ENCODE measurements at regions of chr3 and their contacts with region 1.

Region 1: DNA sequence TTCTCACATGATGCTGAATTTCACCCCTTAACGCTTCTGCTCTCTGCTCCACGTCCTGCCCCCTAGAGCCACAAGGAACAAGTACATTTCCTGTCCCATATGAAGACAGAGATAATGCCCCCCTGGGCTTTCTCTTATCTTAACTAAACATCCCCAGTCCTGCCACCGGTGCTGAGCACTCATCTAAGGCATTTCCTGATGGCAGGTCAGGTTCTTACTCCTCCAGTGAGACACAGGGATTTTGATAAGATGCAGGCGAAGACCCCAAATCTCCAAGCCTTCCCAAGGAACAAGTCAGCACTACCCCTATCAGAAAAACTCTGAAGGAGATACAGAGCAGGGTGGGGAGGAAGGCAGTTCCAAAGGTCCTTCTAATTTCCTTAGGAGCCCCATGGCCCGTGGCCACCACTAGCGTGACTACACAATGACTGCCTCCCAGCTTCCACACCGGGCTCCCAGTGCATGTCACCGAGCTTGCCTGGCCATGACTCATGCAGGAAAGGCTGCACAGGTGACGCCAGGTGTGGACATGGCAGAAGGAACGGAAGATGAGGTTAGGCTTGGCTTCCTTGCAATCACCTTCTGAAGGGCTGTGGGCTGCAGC is 152.9 kb downstream of the XXYLT1 start:
- DNase-seq: peak; percentile 87 to 92 (median 88)
- ATAC-seq: peak; percentile 86
- H3K4me3 ChIP-seq: no peak overlapping the region
- H3K27ac ChIP-seq: peak overlapping the region; percentile 70
- H3K4me1 ChIP-seq: peaks cover 42 to 59% of the 10 kb centered on the region in 2 experiments
- H3K27me3 ChIP-seq: no peaks in the 10 kb centered on the region
- CTCF ChIP-seq: peak; percentile 58 to 71 (median 67)
- EP300 ChIP-seq: peak; percentile 96
- POLR2A ChIP-seq: no peak
- RAD21 ChIP-seq: peak; percentile 43 to 57

Region 2: DNA sequence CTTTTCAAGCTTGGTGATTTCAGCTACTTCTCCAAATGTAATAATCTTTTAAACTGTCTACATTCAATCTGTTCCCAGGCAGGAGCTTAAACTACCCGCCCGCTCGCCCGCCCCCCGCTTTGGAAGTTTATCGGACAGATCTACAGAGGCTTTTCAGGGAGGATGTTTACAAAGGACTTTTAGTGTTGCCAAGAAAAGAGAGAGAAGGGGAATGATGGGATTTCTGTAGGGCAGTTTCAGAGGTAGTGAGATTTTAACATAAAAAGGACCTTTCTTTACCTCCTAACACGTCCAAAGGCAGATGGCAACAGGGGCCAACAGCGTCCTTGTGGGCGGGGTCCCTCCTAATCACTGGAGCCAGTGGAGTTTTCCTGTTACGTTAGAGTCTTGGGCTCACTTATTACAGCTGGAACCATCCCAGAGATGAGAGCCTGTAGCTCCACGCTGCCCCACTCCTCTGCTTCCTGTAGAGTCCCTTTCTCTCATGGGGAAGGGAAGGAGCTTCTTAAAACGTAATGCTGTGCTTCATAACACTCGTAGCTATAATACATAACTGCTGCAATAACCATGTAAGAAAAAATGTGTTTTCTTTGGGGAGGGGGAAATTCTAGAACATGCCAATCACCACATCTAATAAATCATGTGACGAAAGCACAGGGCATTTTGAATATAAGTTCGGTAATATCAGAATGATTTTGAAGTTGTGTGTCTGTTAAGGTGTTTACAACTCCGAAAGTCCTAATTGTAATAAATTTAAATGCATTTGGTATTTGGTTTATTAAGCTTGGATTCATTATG is 951.2 kb before region 1 on chr3:
- CTCF ChIA-PET with region 1: no interaction called
- POLR2A ChIA-PET with region 1: no interaction called
- in situ Hi-C with region 1: no loop called
- intact Hi-C with region 1: no loop called
- DNase-seq: peak; percentile 20 to 69 (median 38)
- ATAC-seq: peak; percentile 80
- H3K4me3 ChIP-seq: 0 out of 2 replicates have a peak overlapping the region, but pooled peaks have one; percentile 5
- H3K27ac ChIP-seq: peak overlapping the region; percentile 12; the same call in 1 of the 3 replicates
- H3K4me1 ChIP-seq: peaks cover 0 to 18% of the 10 kb centered on the region in 2 experiments; a peak in 4 of 5 replicates
- H3K27me3 ChIP-seq: no peaks in the 10 kb centered on the region
- CTCF ChIP-seq: no peak
- EP300 ChIP-seq: no peak; the same call in 1 of the 2 replicates
- POLR2A ChIP-seq: no peak
- RAD21 ChIP-seq: peak in 1 of 2 experiments; percentile 8; a peak in 1 of 4 replicates

Region 3: DNA sequence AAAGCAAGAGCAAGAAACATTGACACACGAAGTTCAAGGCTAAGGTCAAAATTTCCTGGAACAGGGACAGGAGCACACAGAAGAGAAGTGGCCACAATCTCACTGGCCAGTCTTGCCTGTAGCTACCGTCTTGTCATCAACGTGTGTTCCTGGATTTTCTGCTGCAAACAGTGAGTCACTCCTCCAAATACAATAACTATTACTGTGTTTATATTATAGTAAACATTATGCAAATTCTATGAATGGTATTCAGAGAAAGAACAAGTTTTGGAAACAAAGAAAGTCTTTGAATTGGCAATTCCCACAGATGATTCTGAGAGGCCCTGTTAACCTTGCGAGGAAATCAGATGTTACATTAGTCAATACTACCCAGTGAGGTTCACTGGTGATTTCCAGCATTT is 211.9 kb before region 1 on chr3:
- CTCF ChIA-PET with region 1: no interaction called
- POLR2A ChIA-PET with region 1: no interaction called
- in situ Hi-C with region 1: no loop called
- intact Hi-C with region 1: no loop called
- DNase-seq: no peak
- ATAC-seq: no peak
- H3K4me3 ChIP-seq: no peak overlapping the region
- H3K27ac ChIP-seq: no peak overlapping the region
- H3K4me1 ChIP-seq: no peaks in the 10 kb centered on the region
- H3K27me3 ChIP-seq: peaks cover 4 to 33% of the 10 kb centered on the region in 2 experiments; a peak in 3 of 5 replicates
- CTCF ChIP-seq: no peak
- EP300 ChIP-seq: no peak
- POLR2A ChIP-seq: no peak
- RAD21 ChIP-seq: no peak

Region 4: GRCh38 chr3:195154793-195155535 is 36.9 kb after region 1 on chr3:
- CTCF ChIA-PET with region 1: no interaction called
- POLR2A ChIA-PET with region 1: interaction called, 4 read pairs
- in situ Hi-C with region 1: no loop called
- intact Hi-C with region 1: loop called (anchors 5 kb)
- DNase-seq: peak in 2 of 4 experiments; percentile 57 to 70
- ATAC-seq: peak; percentile 17
- H3K4me3 ChIP-seq: no peak overlapping the region
- H3K27ac ChIP-seq: peak overlapping the region; percentile 84
- H3K4me1 ChIP-seq: peaks cover 39 to 55% of the 10 kb centered on the region in 2 experiments
- H3K27me3 ChIP-seq: no peaks in the 10 kb centered on the region
- CTCF ChIP-seq: no peak
- EP300 ChIP-seq: peak; percentile 15; the same call in 1 of the 2 replicates
- POLR2A ChIP-seq: no peak
- RAD21 ChIP-seq: no peak; a peak in 1 of 4 replicates

Region 5: GRCh38 chr3:195182470-195182795 is 64.4 kb after region 1 on chr3:
- CTCF ChIA-PET with region 1: no interaction called
- POLR2A ChIA-PET with region 1: no interaction called
- in situ Hi-C with region 1: no loop called
- intact Hi-C with region 1: loop called (anchors 10 kb)
- DNase-seq: peak in 2 of 4 experiments; percentile 28 to 78
- ATAC-seq: peak; percentile 58
- H3K4me3 ChIP-seq: no peak overlapping the region
- H3K27ac ChIP-seq: peak overlapping the region; percentile 72
- H3K4me1 ChIP-seq: peaks cover 48 to 80% of the 10 kb centered on the region in 2 experiments
- H3K27me3 ChIP-seq: no peaks in the 10 kb centered on the region
- CTCF ChIP-seq: no peak
- EP300 ChIP-seq: peak; percentile 28; the same call in 1 of the 2 replicates
- POLR2A ChIP-seq: no peak
- RAD21 ChIP-seq: no peak; a peak in 1 of 4 replicates

Region 6: GRCh38 chr3:195259475-195260279 is 141.6 kb after region 1 on chr3:
- CTCF ChIA-PET with region 1: no interaction called
- POLR2A ChIA-PET with region 1: no interaction called
- in situ Hi-C with region 1: no loop called
- intact Hi-C with region 1: loop called (anchors 5 kb)
- DNase-seq: peak; percentile 91 to 97 (median 95)
- ATAC-seq: peak; percentile 90
- H3K4me3 ChIP-seq: peak overlapping the region; percentile 55
- H3K27ac ChIP-seq: peak overlapping the region; percentile 89
- H3K4me1 ChIP-seq: peaks cover 14 to 41% of the 10 kb centered on the region in 2 experiments
- H3K27me3 ChIP-seq: no peaks in the 10 kb centered on the region
- CTCF ChIP-seq: peak; percentile 46 to 73 (median 68); a peak in 5 of 6 replicates
- EP300 ChIP-seq: no peak; the same call in 1 of the 2 replicates
- POLR2A ChIP-seq: no peak; the same call in none of the 2 replicates
- RAD21 ChIP-seq: peak; percentile 90 to 96

Measured in K562 (cell line).